CD14-positive monocyte (primary cell): ENCODE measurements at regions of chr15 and their contacts with region 1.

Region 1: DNA sequence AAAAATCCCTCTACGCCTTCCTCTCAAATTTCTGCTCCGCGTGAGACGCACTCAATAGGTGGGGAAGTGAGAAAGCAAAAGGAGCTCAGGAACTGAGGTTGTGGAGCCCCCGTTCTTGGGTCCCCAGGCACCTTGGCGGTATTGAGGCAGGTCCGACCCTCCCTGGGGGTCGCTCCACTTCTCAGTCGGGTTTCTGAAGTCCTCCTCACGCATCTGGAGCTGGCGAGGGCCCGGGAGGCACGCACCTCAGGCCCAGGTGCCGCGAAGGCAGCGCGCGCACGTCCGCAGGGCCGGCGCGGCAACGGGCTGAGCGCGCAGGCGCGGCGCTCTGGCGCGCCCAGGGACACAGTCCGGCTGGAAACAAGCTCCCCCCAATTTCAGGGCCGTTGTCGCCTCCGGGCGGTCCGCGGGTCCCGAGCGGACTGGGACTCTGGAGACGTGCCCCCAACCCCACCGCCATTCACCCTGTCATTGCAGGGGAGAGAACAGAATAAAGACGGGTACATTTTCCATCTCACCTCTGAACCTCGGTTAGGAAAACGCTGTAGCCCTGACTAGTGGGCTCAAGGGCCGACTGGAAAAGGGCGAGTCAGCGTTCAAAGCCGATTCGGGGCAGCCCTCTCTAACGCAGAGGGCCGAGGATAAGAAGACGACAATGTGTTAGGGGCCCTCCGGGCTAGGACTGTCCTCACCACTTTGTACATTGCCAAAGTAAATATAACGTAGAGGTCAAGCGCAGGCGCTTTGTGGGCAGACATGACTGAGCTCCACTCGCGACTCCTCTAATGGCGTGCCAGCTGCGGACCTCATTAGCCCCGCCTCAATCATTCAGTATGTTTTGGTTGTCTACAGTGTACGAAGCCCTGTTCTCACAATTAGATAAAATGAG is at the start of gene ZNF770:
- DNase-seq: peak; percentile 67 to 80 (median 74)
- H3K4me3 ChIP-seq: peak within 1 kb of the TSS; percentile 91 to 95 (median 95)
- H3K4me3 Mint-ChIP-seq: peak within 1 kb of the TSS; percentile 94 to 99
- H3K27ac ChIP-seq: peak within 1 kb of the TSS; percentile 91 to 99
- H3K27ac Mint-ChIP-seq: peak within 1 kb of the TSS; percentile 97 to 99 (median 98)
- H3K4me1 ChIP-seq: peaks cover 35 to 49% of the 10 kb centered on the region in 2 donors
- H3K4me1 Mint-ChIP-seq: peaks cover 45% of the 10 kb centered on the region
- H3K27me3 ChIP-seq: no peaks in the 10 kb centered on the region
- H3K27me3 Mint-ChIP-seq: peaks cover 1 to 3% (median 2%) of the 10 kb centered on the region in 3 donors
- CTCF ChIP-seq: no peak
- polyA plus RNA-seq, gene ZNF770: 8.3 to 51.7 (median 28.1) TPM

Region 2: DNA sequence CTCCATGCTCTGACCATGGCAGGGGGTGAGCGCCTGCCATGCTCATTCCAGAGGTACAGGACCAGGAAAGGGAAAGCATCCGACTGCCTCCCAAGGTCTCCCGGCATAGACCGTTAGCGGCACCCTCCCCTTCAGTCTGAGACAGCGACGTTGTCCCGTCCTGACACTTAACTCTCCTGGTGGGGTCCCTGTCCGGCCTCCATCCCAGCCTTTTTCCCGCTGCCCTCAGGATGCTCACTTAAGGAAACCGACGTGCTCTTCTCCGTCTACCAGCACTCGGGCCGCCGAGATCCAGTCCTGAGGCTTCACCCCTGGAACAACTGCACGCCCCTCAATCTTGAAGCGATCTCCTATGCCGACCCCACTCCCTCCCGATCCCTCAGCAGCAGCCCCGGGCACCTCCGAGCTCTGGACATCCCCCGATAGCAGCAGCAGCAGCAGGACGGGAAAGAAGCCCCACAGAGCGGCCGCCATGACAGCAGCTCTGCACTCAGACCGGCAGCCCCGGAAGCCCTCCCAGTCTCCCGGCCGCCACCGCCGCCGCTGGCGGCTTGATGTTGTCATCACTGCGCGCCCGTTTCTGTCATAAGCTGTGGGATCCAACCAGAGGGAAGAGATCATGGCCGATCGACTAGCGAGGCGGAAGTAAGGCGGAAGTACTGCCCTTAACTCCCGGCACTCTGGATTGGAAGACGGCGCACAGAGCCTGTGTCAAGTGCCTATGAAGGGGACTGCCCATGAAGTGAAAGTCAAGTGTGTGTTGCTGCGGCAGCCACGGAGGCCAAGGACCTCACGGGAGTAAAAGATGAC is 886.7 kb before region 1 on chr15 and contains the starts of genes EMC7 and PGBD4:
- intact Hi-C with region 1: loop called in 1 of 2 experiments (anchors 10 kb)
- DNase-seq: peak; percentile 99 to 100 (median 99)
- H3K4me3 ChIP-seq: peak within 1 kb of the TSS; percentile 87 to 98 (median 97)
- H3K4me3 Mint-ChIP-seq: peak within 1 kb of the TSS; percentile 98 to 99
- H3K27ac ChIP-seq: peak within 1 kb of the TSS; percentile 91 to 96
- H3K27ac Mint-ChIP-seq: peak within 1 kb of the TSS; percentile 98 to 100 (median 99)
- H3K4me1 ChIP-seq: peaks cover 23 to 28% of the 10 kb centered on the region in 2 donors
- H3K4me1 Mint-ChIP-seq: peaks cover 20% of the 10 kb centered on the region
- H3K27me3 ChIP-seq: no peaks in the 10 kb centered on the region
- H3K27me3 Mint-ChIP-seq: no peaks in the 10 kb centered on the region
- CTCF ChIP-seq: no peak
- polyA plus RNA-seq, gene EMC7: 41.7 to 135 (median 125) TPM
- polyA plus RNA-seq, gene PGBD4: 0.38 to 0.93 (median 0.58) TPM

Region 3: GRCh38 chr15:34223904-34224596 is 764.2 kb before region 1 on chr15:
- intact Hi-C with region 1: loop called in 1 of 2 experiments (anchors 5 kb)
- DNase-seq: peak; percentile 4 to 7 (median 6)
- H3K4me3 ChIP-seq: peak overlapping the region; percentile 78 to 100 (median 93)
- H3K4me3 Mint-ChIP-seq: peak overlapping the region; percentile 94 to 96
- H3K27ac ChIP-seq: peak overlapping the region; percentile 72 to 99
- H3K27ac Mint-ChIP-seq: peak overlapping the region; percentile 95 to 99 (median 96)
- H3K4me1 ChIP-seq: peaks cover 16 to 19% of the 10 kb centered on the region in 2 donors
- H3K4me1 Mint-ChIP-seq: peaks cover 18% of the 10 kb centered on the region
- H3K27me3 ChIP-seq: no peaks in the 10 kb centered on the region
- H3K27me3 Mint-ChIP-seq: peaks cover 0 to 1% (median 0%) of the 10 kb centered on the region in 3 donors
- CTCF ChIP-seq: no peak

Region 4: GRCh38 chr15:34337557-34338306 is 650.5 kb before region 1 on chr15 and contains the start of gene SLC12A6:
- intact Hi-C with region 1: loop called in 1 of 2 experiments (anchors 10 kb)
- DNase-seq: peak; percentile 92 to 95 (median 93)
- H3K4me3 ChIP-seq: peak within 1 kb of the TSS; percentile 75 to 99 (median 93)
- H3K4me3 Mint-ChIP-seq: peak within 1 kb of the TSS; percentile 93 to 98
- H3K27ac ChIP-seq: peak within 1 kb of the TSS; percentile 90 to 98
- H3K27ac Mint-ChIP-seq: peak within 1 kb of the TSS; percentile 94 to 99 (median 97)
- H3K4me1 ChIP-seq: peaks cover 57 to 70% of the 10 kb centered on the region in 2 donors
- H3K4me1 Mint-ChIP-seq: peaks cover 55% of the 10 kb centered on the region
- H3K27me3 ChIP-seq: no peaks in the 10 kb centered on the region
- H3K27me3 Mint-ChIP-seq: peaks cover 0 to 2% (median 0%) of the 10 kb centered on the region in 3 donors
- CTCF ChIP-seq: no peak
- polyA plus RNA-seq, gene SLC12A6: 5.4 to 80.0 (median 8.0) TPM

Region 5: GRCh38 chr15:34969340-34970097 is 18.7 kb before region 1 on chr15 and contains the start of gene AQR:
- intact Hi-C with region 1: loop called in 1 of 2 experiments (anchors 1 kb)
- DNase-seq: peak; percentile 94 to 98 (median 96)
- H3K4me3 ChIP-seq: peak within 1 kb of the TSS; percentile 71 to 90 (median 84)
- H3K4me3 Mint-ChIP-seq: peak within 1 kb of the TSS; percentile 100
- H3K27ac ChIP-seq: peak within 1 kb of the TSS; percentile 70 to 85
- H3K27ac Mint-ChIP-seq: peak within 1 kb of the TSS; percentile 95 to 99 (median 98)
- H3K4me1 ChIP-seq: peaks cover 18 to 24% of the 10 kb centered on the region in 2 donors
- H3K4me1 Mint-ChIP-seq: peaks cover 38% of the 10 kb centered on the region
- H3K27me3 ChIP-seq: no peaks in the 10 kb centered on the region
- H3K27me3 Mint-ChIP-seq: peaks cover 0 to 4% (median 2%) of the 10 kb centered on the region in 3 donors
- CTCF ChIP-seq: peak; percentile 80
- polyA plus RNA-seq, gene AQR: 8.4 to 26.4 (median 16.8) TPM

Region 6: GRCh38 chr15:35043373-35044095 is 55.3 kb after region 1 on chr15:
- intact Hi-C with region 1: loop called in 1 of 2 experiments (anchors 10 kb)
- DNase-seq: peak; percentile 26 to 60 (median 49)
- H3K4me3 ChIP-seq: peak overlapping the region in 1 of 3 experiments; percentile 24
- H3K4me3 Mint-ChIP-seq: peak overlapping the region in 1 of 2 donors; percentile 65
- H3K27ac ChIP-seq: peak overlapping the region; percentile 16 to 73
- H3K27ac Mint-ChIP-seq: peak overlapping the region; percentile 69 to 85 (median 79)
- H3K4me1 ChIP-seq: peaks cover 28 to 39% of the 10 kb centered on the region in 2 donors
- H3K4me1 Mint-ChIP-seq: peaks cover 35% of the 10 kb centered on the region
- H3K27me3 ChIP-seq: no peaks in the 10 kb centered on the region
- H3K27me3 Mint-ChIP-seq: peaks cover 0 to 1% (median under 1%) of the 10 kb centered on the region in 3 donors
- CTCF ChIP-seq: no peak